ENCODE measurements at regions of chr14 and their contacts with region 1.

Region 1: GRCh38 chr14:23110579-23111365 is 6.0 kb upstream of the CIROP start:
- DNase-seq: no peak
- H3K4me3 Mint-ChIP-seq: no peak overlapping the region
- H3K27ac Mint-ChIP-seq: no peak overlapping the region
- H3K4me1 Mint-ChIP-seq: peaks cover 8% of the 10 kb centered on the region
- H3K27me3 Mint-ChIP-seq: peaks cover 5% of the 10 kb centered on the region

Region 2: DNA sequence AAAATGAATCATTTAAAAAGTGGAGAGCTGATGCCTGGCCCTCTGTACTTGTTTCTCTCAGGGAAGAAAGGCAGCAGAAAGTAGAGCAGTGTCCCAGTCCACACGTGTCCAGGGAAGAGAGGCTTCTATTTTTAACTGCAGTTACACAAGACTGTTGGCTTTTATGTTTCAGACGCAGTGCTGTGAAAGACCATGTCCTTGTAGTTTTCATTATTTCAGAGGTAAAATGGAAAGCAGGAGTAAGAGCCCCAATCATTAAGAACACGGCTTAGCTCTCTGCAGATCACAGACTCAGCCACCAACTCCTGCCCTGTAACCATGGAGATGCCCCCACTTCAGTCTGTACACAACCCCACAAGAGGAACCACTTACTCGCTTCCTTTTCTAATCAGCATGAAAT is 858.1 kb before region 1 on chr14:
- intact Hi-C with region 1: no loop called
- DNase-seq: no peak
- H3K4me3 Mint-ChIP-seq: no peak overlapping the region
- H3K27ac Mint-ChIP-seq: no peak overlapping the region
- H3K4me1 Mint-ChIP-seq: no peaks in the 10 kb centered on the region
- H3K27me3 Mint-ChIP-seq: no peaks in the 10 kb centered on the region

Region 3: GRCh38 chr14:23076785-23077408 is 33.9 kb before region 1 on chr14:
- intact Hi-C with region 1: loop called (anchors 2 kb)
- DNase-seq: peak; percentile 81
- H3K4me3 Mint-ChIP-seq: no peak overlapping the region
- H3K27ac Mint-ChIP-seq: no peak overlapping the region
- H3K4me1 Mint-ChIP-seq: peaks cover 5% of the 10 kb centered on the region
- H3K27me3 Mint-ChIP-seq: no peaks in the 10 kb centered on the region

Measured in activated CD4-positive, alpha-beta T cell treated with anti-CD3 and anti-CD28 coated beads, Interleukin-2, amount 10 ng/mL, durations not matched to agents 24 days and 14 days (primary cell).